GM12878 (cell line): ENCODE measurements at regions of chr10 and their contacts with region 1.

Region 1: GRCh38 chr10:3811291-3811870 is 26.4 kb upstream of the KLF6 start:
- DNase-seq: peak; percentile 76
- ATAC-seq: peak; percentile 87
- H3K4me3 ChIP-seq: peak overlapping the region; percentile 55; the same call in 1 of the 2 replicates
- H3K27ac ChIP-seq: peak overlapping the region; percentile 82
- H3K4me1 ChIP-seq: peaks cover 42% of the 10 kb centered on the region
- H3K27me3 ChIP-seq: no peaks in the 10 kb centered on the region
- CTCF ChIP-seq: no peak
- EP300 ChIP-seq: peak; percentile 62 to 69; a peak in 3 of 4 replicates
- POLR2A ChIP-seq: peak; percentile 24; the same call in 1 of the 2 replicates
- RAD21 ChIP-seq: peak; percentile 26; the same call in 1 of the 2 replicates

Region 2: DNA sequence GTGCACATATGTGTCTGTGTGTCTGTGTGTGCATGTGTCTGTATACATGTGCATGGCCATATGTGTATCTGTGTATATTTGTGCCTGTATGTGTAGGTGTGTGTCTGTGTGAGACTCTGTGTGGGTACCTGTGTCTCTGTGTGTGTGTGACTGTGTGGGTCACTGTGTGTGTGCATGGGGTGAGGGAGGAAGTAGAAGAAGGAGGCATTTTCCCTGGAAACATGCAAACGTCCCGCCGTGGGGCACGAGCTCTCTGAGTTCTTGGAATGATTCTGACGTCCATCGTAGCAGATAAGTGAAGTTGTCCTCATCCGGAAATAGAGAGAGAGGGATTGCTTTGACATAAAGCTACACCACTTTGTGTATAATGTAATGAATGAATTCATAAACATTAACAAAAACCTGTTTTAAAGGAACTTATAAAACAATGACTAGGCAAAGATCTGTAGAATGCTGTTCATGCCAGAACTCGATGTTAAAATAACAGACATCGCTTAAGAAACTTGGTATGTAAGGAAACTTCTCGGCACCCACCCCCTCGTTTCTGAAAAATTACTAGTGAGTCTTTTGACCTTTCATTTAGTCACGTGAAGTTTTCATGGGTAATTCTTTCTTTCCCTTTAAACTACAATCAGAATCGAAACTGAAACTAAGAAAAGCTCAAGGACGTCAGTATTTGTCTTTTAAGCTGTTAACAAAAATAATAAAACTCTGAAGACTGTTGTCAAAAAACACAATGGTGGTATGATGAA is 17.2 kb after region 1 on chr10:
- CTCF ChIA-PET with region 1: interaction called, 7 read pairs
- POLR2A ChIA-PET with region 1: interaction called, 24 read pairs
- RAD21 ChIA-PET with region 1: interaction called, 41 read pairs
- SMC1A ChIA-PET with region 1: interaction called, 280 read pairs
- in situ Hi-C with region 1: no loop called
- intact Hi-C with region 1: no loop called
- DNase-seq: no peak
- ATAC-seq: peak; percentile 62
- H3K4me3 ChIP-seq: no peak overlapping the region
- H3K27ac ChIP-seq: peak overlapping the region; percentile 4
- H3K4me1 ChIP-seq: peaks cover 25% of the 10 kb centered on the region
- H3K27me3 ChIP-seq: no peaks in the 10 kb centered on the region
- CTCF ChIP-seq: no peak
- EP300 ChIP-seq: no peak
- POLR2A ChIP-seq: no peak
- RAD21 ChIP-seq: no peak

Region 3: DNA sequence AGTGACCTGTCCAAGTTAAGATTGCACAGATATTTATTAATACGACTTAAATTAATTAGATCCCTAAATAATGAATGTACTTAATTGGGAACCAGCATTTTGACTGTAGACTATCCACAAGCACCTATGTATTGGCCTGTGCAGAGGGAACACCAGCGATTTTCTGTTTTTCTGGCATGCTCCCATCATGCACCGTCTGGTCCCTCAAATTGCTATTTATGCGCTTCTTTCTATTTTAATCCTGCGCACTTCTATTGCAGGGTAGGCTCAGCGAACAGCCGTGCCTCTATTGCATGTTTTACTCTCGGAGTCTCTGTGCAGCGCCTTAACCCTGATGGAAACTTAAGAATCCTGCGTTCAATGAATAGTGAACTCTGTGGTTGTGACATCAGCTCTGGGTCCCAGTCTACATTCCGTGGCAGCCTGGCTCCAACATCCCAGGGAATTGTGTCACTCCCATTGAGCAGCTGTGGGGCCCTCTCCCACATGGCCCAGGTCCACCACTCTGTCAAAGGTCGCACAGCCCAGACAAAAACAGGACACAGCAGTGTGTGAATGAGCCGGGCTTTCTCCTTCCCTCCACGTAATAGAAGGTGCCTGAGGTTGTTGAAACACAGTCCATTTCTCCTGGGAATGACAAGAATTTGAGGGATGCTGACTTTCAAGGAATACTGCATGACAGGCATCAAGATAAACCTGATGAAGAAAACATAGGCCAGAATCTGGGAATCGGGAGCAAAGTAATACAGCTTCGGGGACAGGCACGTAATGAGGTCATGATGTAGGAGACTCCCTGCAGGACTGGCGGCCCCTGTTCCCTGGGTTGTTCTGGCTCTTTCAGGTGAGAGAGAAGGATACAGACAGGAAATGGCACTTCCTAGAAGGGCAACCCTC is 213.4 kb after region 1 on chr10:
- CTCF ChIA-PET with region 1: no interaction called
- POLR2A ChIA-PET with region 1: no interaction called
- RAD21 ChIA-PET with region 1: no interaction called
- SMC1A ChIA-PET with region 1: no interaction called
- in situ Hi-C with region 1: no loop called
- intact Hi-C with region 1: no loop called
- DNase-seq: no peak
- ATAC-seq: no peak
- H3K4me3 ChIP-seq: no peak overlapping the region
- H3K27ac ChIP-seq: no peak overlapping the region
- H3K4me1 ChIP-seq: no peaks in the 10 kb centered on the region
- H3K27me3 ChIP-seq: 0 out of 4 replicates have a peak, but pooled peaks cover 0 to 3% of the 10 kb centered on the region in 2 experiments
- CTCF ChIP-seq: no peak
- EP300 ChIP-seq: no peak
- POLR2A ChIP-seq: no peak
- RAD21 ChIP-seq: no peak